ENCODE measurements at regions of chr12 and their contacts with region 1.

Region 1: GRCh38 chr12:123983822-123984485 is 10.9 kb downstream of the ZNF664 start:
- DNase-seq: no peak
- H3K4me3 ChIP-seq: no peak overlapping the region
- H3K27ac ChIP-seq: no peak overlapping the region
- H3K27me3 ChIP-seq: no peaks in the 10 kb centered on the region
- CTCF ChIP-seq: peak; percentile 85

Region 2: DNA sequence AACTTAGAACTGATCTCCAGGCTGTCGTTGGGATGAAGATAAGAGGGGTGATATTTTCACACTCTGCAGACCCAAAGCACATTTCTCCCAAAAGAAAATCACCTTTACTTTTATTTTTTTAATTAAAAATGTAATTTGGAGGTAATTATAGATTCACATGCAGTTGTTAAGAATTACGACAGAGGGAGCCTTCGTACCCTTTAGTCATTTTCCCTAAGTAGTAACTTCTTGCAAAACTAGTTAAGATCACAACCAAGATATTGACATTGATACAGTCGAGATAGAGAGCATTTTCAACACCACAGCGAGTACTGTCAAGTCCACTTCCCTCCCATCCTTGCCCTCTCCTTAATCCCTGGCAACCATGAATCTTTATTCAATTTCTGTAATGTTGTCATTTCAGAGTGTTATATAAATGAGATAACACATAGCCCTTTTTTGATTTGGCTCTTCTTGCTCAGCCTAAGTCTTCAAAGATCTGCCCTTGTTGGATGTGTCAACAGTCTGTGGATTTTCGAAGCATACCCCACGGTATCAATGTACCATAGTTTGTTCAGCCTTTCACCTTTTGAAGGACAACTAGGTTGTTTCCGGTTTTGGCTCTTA is 182.3 kb before region 1 on chr12:
- CTCF ChIA-PET with region 1: interaction called, 28 read pairs
- POLR2A ChIA-PET with region 1: no interaction called
- DNase-seq: peak; percentile 7
- H3K4me3 ChIP-seq: no peak overlapping the region
- H3K27ac ChIP-seq: no peak overlapping the region
- H3K27me3 ChIP-seq: no peaks in the 10 kb centered on the region
- CTCF ChIP-seq: peak; percentile 70

Region 3: DNA sequence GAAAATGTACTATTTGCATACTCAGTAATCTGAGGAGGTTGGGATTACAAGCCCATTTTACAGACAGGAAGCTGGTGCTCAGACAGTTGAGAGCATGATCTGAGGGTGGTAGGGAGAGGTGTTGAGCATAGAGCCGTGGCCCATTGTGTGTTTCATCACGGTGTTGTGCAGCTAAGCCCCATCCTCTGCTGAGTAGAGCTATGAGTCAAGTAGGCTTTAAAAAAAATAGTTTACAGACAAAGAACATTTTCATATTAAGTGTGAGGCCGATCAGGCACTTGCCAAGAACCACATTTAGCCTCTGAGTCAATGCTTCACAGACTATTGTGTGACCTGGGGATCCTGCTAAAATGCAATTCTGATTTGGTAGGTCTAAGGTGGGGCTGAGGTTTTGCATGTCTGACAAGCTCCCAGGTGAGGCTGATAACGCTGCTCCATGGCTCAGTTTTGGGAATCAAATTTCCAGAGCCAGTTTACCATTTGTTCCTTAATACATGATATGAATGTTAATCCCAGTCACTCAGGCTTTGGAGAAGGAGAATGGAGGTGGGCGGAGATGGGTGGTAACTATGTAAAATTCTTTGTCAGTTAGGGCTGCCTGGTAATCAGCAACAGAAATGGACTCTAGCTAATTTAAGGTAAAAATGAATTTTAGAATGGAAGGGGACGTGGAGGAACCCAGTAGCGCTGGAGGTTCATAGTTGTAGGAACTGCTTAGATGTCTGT is 11.2 kb after region 1 on chr12:
- CTCF ChIA-PET with region 1: interaction called, 13 read pairs
- POLR2A ChIA-PET with region 1: no interaction called
- DNase-seq: no peak
- H3K4me3 ChIP-seq: no peak overlapping the region
- H3K27ac ChIP-seq: no peak overlapping the region
- H3K27me3 ChIP-seq: no peaks in the 10 kb centered on the region
- CTCF ChIP-seq: no peak

Region 4: DNA sequence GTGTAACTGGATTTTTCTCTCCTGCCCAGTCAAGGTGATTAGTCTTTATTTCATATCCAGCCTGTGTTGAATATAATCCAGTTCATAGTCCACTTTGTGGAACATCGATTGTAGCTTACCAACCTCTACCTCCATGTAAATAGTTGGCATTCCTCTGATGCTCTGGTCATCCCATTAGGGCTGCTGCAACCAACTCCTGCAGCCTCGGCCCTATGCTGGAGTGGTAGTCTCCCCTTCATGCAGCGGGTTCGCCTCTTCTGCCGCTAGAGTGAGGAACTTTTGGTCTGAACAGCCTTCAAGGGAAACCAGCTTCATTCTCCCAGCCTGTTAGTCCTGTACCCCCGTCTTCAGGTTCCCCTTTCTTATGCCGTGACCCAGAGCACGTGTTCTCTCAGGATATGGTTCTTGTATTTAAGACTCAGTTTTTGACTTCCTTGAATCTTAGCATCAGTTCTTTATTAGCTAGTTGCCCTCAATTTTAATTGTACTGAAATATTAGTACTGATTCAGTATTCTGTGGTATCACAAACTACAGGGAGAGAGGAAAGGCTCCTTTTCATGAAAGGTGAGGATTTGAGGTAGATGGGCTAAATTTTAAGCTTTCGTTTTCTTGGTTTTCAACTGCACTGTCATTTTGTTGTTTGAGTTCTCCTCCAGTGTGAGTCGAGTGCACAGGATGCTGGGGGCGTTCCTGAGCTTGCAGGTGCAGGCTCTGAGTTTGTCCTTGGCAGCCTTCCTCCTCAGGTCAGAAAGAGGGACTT is 22.3 kb after region 1 on chr12:
- CTCF ChIA-PET with region 1: no interaction called
- POLR2A ChIA-PET with region 1: no interaction called
- DNase-seq: no peak
- H3K4me3 ChIP-seq: no peak overlapping the region
- H3K27ac ChIP-seq: no peak overlapping the region
- H3K27me3 ChIP-seq: no peaks in the 10 kb centered on the region
- CTCF ChIP-seq: no peak